ENCODE measurements at regions of chr7 and their contacts with region 1.

Region 1: DNA sequence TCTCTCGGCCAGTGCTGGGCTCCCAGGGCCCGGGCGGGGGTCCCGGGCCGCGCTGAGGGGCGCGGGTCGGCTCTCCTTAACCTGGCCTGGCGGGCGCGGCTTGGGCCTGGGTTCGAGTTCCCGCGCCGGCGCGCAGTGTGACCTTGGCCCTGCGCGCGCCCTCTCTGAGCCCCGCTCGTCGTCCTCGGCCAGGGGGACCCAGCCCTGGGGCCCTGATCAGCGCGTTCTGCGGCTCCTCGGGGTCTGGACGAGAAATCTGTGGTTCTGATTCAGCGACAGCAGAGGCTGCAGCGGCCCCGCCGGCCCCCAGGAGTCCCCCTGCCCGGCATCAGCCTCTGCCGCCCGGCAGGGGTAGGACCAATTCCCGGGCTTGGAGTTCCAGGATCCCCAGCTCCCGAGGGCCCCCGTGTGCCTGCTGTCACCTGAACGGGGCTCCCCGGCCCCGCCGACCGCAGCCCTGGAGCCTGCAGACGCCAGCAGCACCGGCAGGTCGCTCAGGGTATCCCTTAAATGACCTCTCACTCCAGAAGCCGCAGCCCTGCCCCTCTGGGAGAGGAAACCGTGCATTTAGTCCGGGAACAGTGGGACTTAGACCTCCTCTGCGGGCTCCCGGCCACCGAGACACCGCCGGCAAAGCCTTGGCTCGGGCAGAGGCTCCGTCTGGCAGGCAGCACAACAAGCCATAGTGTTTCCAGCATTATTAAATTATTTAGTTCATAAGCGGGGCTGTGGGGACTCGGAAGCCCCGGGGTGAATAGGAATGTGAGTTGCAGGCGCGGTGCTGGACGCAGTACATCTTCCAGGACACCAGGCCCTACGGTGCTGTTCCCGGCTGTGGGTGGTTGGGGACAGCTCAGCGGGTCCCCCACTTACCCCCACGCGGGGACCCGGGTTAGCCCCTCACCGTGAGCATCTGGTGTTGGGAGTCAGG is 572 bp downstream of the CHST12 start:
- DNase-seq: peak; percentile 37
- H3K4me3 Mint-ChIP-seq: peak overlapping the region; percentile 88
- H3K27ac Mint-ChIP-seq: peak overlapping the region; percentile 99
- H3K4me1 Mint-ChIP-seq: peaks cover 60% of the 10 kb centered on the region
- H3K27me3 Mint-ChIP-seq: no peaks in the 10 kb centered on the region

Region 2: DNA sequence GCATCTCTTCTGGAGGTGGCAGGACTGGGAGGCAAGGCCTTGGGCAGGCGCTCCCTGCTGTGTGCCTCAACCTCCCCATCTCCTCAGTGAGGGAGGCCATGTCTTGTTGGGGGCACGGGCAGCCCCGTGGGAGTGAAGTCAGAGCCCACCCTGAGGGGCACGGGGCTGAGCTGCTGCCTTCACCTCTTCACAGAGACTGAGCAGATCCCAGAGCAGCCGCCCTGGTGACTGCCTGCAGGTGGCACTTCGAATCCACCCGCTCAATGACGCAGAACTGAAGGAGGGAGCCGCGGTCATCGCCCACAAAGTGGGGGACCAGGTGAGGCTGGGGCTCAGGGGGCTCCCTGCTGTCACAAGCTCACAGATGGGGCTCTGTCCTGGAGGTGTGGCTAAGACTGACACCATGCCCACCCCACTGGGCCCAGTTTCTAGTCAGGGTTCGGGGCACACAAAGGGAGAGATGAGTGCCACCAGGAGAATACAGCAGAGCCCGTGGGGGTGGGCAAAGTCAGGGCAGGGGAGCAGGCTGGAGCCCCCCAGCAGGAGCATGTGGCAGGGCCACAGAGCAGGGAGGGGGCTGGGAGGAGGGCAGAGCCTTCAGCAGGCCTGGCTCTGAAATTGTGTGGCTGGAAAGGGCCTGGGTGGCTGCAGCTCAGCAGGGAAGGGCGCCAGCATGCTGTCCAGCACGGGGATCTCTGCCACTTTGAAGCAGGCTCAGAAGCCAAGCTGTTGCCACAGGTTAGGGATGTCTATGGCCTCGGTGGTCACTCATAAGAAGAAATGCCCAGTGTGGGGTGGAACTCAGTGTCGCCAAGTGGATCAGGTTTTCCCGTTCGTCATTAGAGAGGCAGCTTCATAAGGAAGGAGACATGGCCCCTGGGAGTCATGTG is 19.4 kb before region 1 on chr7:
- CTCF ChIA-PET with region 1: no interaction called
- POLR2A ChIA-PET with region 1: no interaction called
- DNase-seq: no peak
- H3K4me3 Mint-ChIP-seq: no peak overlapping the region
- H3K27ac Mint-ChIP-seq: no peak overlapping the region
- H3K4me1 Mint-ChIP-seq: no peaks in the 10 kb centered on the region
- H3K27me3 Mint-ChIP-seq: no peaks in the 10 kb centered on the region

Region 3: DNA sequence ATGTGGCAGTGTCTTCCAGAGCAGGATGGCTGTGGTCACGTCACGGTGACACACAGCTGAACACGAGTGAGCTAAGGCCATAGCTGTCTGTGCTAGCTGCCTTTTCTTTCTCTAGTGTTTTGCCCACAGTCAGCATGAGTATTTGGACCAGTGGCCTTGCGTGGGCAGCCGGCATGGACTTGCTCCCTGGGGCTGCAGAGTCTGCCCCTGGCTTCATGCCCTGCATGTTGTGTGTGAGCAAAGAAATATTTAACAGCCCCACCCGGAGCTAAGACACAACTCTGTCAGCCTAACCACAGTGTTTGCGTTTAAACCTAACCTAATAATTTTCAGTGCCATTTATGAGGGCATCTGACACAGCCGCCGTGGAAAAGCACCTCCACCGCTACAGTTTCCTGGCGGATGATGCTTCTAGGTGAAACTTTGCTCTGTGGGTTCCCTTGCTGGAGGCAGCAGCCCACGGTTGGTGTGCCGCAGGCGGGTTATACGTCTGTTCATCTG is 14.0 kb after region 1 on chr7:
- CTCF ChIA-PET with region 1: interaction called, 5 read pairs
- POLR2A ChIA-PET with region 1: interaction called, 29 read pairs
- DNase-seq: peak; percentile 67
- H3K4me3 Mint-ChIP-seq: peak overlapping the region; percentile 25
- H3K27ac Mint-ChIP-seq: peak overlapping the region; percentile 59
- H3K4me1 Mint-ChIP-seq: peaks cover 48% of the 10 kb centered on the region
- H3K27me3 Mint-ChIP-seq: no peaks in the 10 kb centered on the region

Region 4: DNA sequence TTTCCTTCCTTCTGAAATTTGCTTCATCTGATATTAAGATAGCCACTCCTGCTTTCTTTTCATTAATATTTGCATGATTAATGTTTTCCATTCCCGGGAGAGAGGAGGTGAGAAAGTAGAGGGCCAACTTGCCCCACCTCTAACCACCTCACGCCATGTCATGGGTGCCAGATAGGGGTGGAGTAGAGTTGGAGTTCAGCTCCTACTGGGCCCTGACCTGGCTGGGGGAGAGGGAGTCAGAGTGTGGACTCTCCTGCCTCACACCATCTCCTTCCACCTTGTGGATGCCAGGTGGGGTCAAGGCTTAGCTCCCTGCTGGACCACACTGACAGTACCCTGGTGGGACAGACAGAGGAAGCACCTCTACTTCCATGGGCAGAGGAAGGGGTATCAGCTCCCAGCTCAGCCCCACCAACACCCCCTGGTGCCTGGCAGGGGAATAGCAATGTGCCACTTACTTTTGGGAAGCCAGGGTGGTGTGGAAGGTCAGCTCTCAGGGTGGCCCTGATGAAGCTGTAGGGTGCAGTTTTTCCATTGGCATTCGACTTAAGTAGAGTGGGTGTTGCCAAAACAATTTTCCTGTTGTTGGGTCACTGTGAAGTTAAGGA is 27.4 kb after region 1 on chr7:
- CTCF ChIA-PET with region 1: interaction called, 7 read pairs
- POLR2A ChIA-PET with region 1: interaction called, 16 read pairs
- DNase-seq: peak; percentile 50
- H3K4me3 Mint-ChIP-seq: no peak overlapping the region
- H3K27ac Mint-ChIP-seq: no peak overlapping the region
- H3K4me1 Mint-ChIP-seq: peaks cover 30% of the 10 kb centered on the region
- H3K27me3 Mint-ChIP-seq: no peaks in the 10 kb centered on the region

Measured in activated CD4-positive, alpha-beta memory T cell treated with anti-CD3 and anti-CD28 coated beads, Interleukin-2, amount 10 ng/mL, durations not matched to agents 7 days and 5 days (primary cell).